Mammary epithelial cell (primary cell): ENCODE measurements at regions of chr1 and their contacts with region 1.

Region 1: DNA sequence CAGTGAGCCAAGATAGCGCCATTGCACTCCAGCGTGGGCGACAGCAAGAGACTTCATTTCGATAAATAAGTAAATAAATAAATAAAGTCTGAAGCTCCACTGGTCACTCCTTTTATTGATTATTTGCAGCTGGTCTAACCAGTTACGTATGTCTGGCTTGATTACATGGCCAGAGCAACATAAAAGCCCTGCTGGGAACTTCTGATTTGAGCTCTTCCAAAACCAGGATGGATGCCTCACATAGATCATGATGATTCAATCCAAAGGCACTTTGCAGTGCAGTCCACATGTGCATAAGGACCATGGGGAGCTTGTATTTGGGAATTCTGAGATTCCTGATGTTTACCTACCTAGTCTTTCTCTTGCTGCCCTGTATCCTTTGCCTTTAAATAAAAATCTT is 24.0 kb downstream of the NSUN4 start:
- DNase-seq: no peak
- H3K4me3 ChIP-seq: no peak overlapping the region
- H3K27ac ChIP-seq: no peak overlapping the region
- H3K4me1 ChIP-seq: no peaks in the 10 kb centered on the region
- H3K27me3 ChIP-seq: no peaks in the 10 kb centered on the region
- CTCF ChIP-seq: no peak

Region 2: GRCh38 chr1:46132529-46133180 is 232.0 kb before region 1 on chr1 and contains the start of gene PIK3R3:
- CTCF ChIA-PET with region 1: no interaction called
- dilution Hi-C with region 1: no loop called
- in situ Hi-C with region 1: no loop called
- intact Hi-C with region 1: no loop called
- DNase-seq: peak; percentile 99
- H3K4me3 ChIP-seq: peak within 1 kb of the TSS; percentile 76 to 99 (median 78)
- H3K27ac ChIP-seq: peak within 1 kb of the TSS; percentile 91
- H3K4me1 ChIP-seq: peaks cover 26% of the 10 kb centered on the region
- H3K27me3 ChIP-seq: no peaks in the 10 kb centered on the region
- CTCF ChIP-seq: no peak
- total RNA-seq, gene PIK3R3: 12.8 to 13.8 TPM

Region 3: DNA sequence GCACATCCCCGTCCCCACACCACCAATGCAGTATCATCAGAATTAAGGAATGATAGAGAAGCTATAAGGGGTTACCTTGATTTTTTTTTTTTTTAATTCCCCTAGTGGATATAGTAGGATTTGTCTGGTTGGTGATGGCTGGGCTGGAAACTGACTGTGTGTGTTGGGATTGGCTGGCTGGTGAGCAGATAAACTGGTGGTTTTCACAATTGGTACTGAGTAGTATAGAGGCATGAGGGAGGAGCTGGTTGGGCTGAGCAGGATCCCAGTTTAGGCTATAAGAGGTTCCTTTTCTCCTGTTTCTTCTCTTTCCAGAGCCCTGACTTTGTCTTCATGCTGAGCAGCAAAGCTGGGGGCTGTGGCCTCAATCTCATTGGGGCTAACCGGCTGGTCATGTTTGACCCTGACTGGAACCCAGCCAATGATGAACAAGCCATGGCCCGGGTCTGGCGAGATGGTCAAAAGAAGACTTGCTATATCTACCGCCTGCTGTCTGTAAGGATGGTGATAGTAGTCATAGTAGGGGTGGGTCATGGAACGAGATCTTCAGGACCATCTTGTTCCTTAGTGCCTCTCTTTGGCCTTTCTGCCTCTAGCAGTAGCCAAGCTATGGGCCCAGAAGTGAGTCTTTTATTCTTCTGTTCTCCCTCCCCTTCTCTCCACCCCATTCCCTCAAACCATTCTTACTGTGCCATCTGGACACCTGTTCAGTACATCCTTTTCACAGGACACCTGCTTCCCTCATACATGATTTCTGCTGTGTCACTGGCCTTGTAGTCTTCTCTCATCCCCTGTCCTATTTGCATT is 90.2 kb before region 1 on chr1:
- CTCF ChIA-PET with region 1: no interaction called
- dilution Hi-C with region 1: loop called (anchors 5 kb)
- in situ Hi-C with region 1: no loop called
- intact Hi-C with region 1: no loop called
- DNase-seq: no peak
- H3K4me3 ChIP-seq: no peak overlapping the region
- H3K27ac ChIP-seq: no peak overlapping the region
- H3K4me1 ChIP-seq: no peaks in the 10 kb centered on the region
- H3K27me3 ChIP-seq: no peaks in the 10 kb centered on the region
- CTCF ChIP-seq: no peak

Region 4: DNA sequence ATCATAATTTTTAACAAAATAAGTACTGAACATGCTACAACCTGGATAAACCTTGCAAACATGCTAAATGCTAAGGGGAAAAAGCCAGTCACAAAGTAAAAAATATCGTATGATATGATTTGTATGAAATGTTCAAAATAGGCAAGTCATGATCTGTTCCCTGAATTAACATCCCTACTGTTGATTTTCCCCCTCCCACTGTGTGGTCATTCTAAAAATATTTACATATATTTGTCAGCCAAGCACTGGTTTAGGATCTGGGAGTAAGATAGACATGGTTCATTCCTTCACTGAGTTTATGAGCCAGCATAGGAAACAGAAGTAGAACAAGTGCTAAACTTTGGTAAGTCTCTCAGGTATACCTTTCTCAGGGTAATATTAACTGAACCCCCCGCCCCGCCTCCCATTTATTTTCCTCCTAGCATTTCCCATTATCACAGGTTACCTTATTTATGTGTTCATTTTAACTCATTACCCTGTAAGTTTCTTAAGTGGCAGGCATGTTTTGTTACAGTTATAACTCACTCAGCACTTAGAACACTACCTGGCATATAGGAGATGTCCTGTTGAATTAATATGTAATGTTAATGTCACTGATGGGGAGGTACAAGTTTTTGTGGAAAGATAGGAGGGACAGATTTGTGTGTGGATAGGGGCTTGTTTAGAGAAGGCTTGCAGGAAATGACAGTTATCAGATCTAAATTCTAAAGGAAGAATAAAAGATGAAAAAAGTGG is 48.8 kb before region 1 on chr1:
- CTCF ChIA-PET with region 1: no interaction called
- dilution Hi-C with region 1: no loop called
- in situ Hi-C with region 1: no loop called
- intact Hi-C with region 1: no loop called
- DNase-seq: peak; percentile 40
- H3K4me3 ChIP-seq: no peak overlapping the region
- H3K27ac ChIP-seq: no peak overlapping the region
- H3K4me1 ChIP-seq: no peaks in the 10 kb centered on the region
- H3K27me3 ChIP-seq: no peaks in the 10 kb centered on the region
- CTCF ChIP-seq: no peak